Transverse colon (tissue), 4 donors: ENCODE measurements at regions of chr6 and their contacts with region 1.

Region 1: DNA sequence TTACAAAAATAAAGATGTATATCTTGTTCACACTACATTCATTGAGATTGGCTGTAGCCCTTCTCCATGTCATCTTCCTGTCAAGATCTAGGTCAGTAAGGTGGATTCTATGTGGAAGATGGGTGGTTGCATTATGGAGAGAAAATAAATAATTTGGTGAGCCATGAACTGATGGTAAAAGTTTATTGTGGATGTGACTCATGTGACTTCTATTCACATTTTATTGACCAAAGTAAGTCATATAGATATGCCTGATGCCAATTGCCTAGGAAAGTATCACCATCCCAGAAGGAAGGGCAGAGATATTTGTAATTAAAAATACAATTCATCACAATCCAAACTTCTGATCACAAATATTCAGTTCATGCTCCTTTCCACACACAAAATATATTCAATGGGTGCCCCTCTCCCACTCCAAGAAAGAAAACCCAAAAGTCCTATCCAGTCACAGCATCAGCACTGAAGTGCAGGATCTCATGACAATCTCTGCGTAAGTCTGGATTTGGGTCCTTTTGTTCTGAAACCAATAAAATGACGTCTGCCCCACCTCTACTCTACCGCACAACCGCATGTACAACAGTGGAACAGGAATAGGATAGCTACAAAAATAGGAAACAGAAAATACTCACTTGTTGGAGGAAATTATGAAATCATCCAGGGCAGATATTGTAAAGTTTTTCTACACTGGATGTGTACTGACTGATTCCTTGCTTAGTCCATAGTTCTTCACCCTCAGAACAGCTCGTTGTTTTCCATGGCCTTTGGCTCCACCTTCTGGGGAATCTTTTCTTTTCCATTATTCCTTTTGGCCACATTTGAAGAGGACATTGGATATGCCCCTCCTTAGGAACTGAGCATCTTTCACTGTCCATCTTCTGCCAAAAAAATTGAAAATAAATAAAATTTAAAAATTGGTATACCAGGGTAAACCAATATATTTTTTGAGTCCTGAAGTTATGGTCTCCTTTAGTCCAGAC is 16.1 kb upstream of the SLC17A3 start:
- DNase-seq: peak; percentile 20
- H3K4me3 ChIP-seq: no peak overlapping the region
- H3K27ac ChIP-seq: no peak overlapping the region
- H3K4me1 ChIP-seq: peaks cover 0 to 3% (median 2%) of the 10 kb centered on the region in 4 donors
- H3K27me3 ChIP-seq: no peaks in the 10 kb centered on the region
- CTCF ChIP-seq: peak; percentile 42 to 57 (median 44)
- EP300 ChIP-seq: no peak
- POLR2A ChIP-seq: no peak

Region 2: GRCh38 chr6:25746968-25747367 is 143.2 kb before region 1 on chr6:
- in situ Hi-C with region 1: no loop called
- intact Hi-C with region 1: no loop called
- DNase-seq: peak; percentile 29
- H3K4me3 ChIP-seq: no peak overlapping the region
- H3K27ac ChIP-seq: peak overlapping the region in 2 of 4 donors; percentile 3 to 31
- H3K4me1 ChIP-seq: peaks cover 6 to 48% (median 22%) of the 10 kb centered on the region in 4 donors
- H3K27me3 ChIP-seq: no peaks in the 10 kb centered on the region
- CTCF ChIP-seq: peak; percentile 10 to 63 (median 37)
- EP300 ChIP-seq: no peak
- POLR2A ChIP-seq: no peak

Region 3: DNA sequence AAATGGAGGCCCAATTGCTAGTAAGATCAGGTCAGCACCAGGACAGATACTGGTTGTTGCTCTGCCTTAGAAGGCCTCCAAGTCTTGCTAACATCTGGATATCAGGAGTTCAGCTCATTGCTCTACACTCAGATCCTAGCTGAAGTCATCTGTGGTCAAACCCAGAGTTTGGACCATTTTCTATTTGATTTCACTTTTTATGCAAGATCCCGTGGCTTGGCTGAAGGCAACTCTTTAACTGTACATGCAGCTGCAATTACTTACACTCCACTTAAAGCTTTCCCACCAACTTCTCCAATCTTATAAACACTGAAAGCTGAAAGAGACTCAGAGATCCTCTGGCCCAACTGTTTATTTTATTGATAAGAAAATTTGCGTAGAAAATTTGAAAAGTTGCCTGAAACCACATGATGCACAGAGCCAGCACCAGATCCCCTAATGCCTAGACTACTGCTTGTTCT is 37.6 kb after region 1 on chr6:
- in situ Hi-C with region 1: no loop called
- intact Hi-C with region 1: loop called (anchors 1 kb)
- DNase-seq: no peak
- H3K4me3 ChIP-seq: no peak overlapping the region
- H3K27ac ChIP-seq: no peak overlapping the region
- H3K4me1 ChIP-seq: no peaks in the 10 kb centered on the region
- H3K27me3 ChIP-seq: no peaks in the 10 kb centered on the region
- CTCF ChIP-seq: no peak
- EP300 ChIP-seq: no peak
- POLR2A ChIP-seq: no peak

Region 4: DNA sequence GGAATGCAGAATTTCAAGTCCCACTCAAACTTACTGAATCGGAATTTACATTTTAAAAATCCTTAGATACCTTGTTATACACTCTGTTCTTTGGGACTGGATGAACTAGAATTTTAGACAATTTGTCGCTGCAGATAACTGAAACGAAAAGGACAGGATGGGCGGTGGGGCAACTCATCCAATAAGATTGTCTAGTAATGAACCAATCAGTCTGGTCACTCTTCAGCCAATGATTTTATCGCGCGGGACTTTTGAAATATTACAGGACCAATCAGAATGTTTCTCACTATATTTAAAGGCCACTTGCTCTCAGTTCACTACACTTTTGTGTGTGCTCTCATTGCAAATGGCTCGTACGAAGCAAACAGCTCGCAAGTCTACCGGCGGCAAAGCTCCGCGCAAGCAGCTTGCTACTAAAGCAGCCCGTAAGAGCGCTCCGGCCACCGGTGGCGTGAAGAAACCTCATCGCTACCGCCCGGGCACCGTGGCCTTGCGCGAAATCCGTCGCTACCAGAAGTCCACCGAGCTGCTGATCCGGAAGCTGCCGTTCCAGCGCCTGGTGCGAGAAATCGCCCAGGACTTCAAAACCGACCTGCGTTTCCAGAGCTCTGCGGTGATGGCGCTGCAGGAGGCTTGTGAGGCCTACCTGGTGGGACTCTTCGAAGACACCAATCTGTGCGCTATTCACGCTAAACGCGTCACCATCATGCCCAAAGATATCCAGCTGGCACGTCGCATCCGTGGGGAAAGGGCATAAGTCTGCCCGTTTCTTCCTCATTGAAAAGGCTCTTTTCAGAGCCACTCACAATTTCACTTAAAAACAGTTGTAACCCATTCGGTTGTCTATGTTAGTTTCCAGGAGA is 155.1 kb after region 1 on chr6:
- in situ Hi-C with region 1: no loop called
- intact Hi-C with region 1: no loop called
- DNase-seq: peak; percentile 80
- H3K4me3 ChIP-seq: peak overlapping the region; percentile 27 to 55 (median 38)
- H3K27ac ChIP-seq: peak overlapping the region; percentile 94 to 98 (median 96)
- H3K4me1 ChIP-seq: peaks cover 0 to 22% (median 13%) of the 10 kb centered on the region in 4 donors
- H3K27me3 ChIP-seq: no peaks in the 10 kb centered on the region
- CTCF ChIP-seq: peak in 2 of 5 experiments; percentile 24 to 33
- EP300 ChIP-seq: no peak
- POLR2A ChIP-seq: peak; percentile 97